AG04450 (cell line): ENCODE measurements at regions of chr6 and their contacts with region 1.

Region 1: GRCh38 chr6:52419809-52420670 is at the start of gene EFHC1:
- DNase-seq: peak; percentile 93
- H3K4me3 ChIP-seq: peak within 1 kb of the TSS; percentile 78
- H3K27ac ChIP-seq: peak within 1 kb of the TSS; percentile 69
- H3K27me3 ChIP-seq: no peaks in the 10 kb centered on the region
- CTCF ChIP-seq: no peak
- polyA plus RNA-seq, gene EFHC1: 43.3 and 59.8 TPM in 2 replicates

Region 2: DNA sequence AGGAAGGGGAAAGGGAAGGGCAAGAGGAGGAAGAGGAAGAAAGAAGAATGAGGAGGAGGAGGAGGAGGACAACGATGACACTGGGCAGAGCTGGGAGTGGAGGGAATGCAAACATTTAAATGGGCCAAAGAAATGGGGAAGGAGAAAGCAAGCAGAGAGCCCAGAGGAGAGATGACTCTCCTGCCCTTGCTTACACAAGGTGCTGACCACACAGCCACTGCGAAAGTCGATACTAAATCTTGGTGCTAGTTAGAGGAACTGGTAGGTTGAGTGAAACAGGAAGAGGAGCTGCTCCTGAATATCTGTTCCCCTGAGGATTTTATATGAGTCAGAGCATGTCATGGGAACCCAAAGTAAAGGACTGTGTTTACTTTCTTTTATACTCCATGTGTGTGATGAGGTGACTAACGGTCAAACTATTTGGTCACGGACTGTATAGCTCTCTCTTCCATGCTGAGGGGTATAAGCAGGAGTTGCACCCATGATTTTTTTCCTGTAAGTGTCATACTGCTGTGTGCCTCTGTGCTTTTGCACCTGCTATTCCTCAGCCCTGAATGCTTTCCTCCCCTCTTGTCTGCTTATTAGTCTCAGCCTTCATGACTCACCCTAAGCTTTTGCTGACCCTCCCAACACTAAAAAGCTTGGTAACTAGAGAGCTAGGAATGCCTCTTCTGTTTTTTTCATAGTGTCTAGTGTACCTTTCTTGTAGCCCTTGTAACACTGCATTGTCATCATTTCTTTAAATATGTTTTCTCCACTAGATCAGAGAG is 67.6 kb before region 1 on chr6:
- CTCF ChIA-PET with region 1: no interaction called
- POLR2A ChIA-PET with region 1: interaction called, 10 read pairs
- DNase-seq: peak; percentile 92
- H3K4me3 ChIP-seq: peak overlapping the region; percentile 42
- H3K27ac ChIP-seq: peak overlapping the region; percentile 95
- H3K27me3 ChIP-seq: no peaks in the 10 kb centered on the region
- CTCF ChIP-seq: no peak

Region 3: GRCh38 chr6:52577022-52577777 is 157.2 kb after region 1 on chr6 and contains the start of gene TRAM2:
- CTCF ChIA-PET with region 1: interaction called, 13 read pairs
- POLR2A ChIA-PET with region 1: interaction called, 5 read pairs
- DNase-seq: no peak
- H3K4me3 ChIP-seq: peak within 1 kb of the TSS; percentile 94
- H3K27ac ChIP-seq: peak within 1 kb of the TSS; percentile 89
- H3K27me3 ChIP-seq: no peaks in the 10 kb centered on the region
- CTCF ChIP-seq: no peak
- polyA plus RNA-seq, gene TRAM2: 134 and 152 TPM in 2 replicates

Region 4: GRCh38 chr6:52584203-52584602 is 164.2 kb after region 1 on chr6:
- CTCF ChIA-PET with region 1: no interaction called
- POLR2A ChIA-PET with region 1: interaction called, 12 read pairs
- DNase-seq: no peak
- H3K4me3 ChIP-seq: no peak overlapping the region
- H3K27ac ChIP-seq: no peak overlapping the region
- H3K27me3 ChIP-seq: no peaks in the 10 kb centered on the region
- CTCF ChIP-seq: no peak

Region 5: DNA sequence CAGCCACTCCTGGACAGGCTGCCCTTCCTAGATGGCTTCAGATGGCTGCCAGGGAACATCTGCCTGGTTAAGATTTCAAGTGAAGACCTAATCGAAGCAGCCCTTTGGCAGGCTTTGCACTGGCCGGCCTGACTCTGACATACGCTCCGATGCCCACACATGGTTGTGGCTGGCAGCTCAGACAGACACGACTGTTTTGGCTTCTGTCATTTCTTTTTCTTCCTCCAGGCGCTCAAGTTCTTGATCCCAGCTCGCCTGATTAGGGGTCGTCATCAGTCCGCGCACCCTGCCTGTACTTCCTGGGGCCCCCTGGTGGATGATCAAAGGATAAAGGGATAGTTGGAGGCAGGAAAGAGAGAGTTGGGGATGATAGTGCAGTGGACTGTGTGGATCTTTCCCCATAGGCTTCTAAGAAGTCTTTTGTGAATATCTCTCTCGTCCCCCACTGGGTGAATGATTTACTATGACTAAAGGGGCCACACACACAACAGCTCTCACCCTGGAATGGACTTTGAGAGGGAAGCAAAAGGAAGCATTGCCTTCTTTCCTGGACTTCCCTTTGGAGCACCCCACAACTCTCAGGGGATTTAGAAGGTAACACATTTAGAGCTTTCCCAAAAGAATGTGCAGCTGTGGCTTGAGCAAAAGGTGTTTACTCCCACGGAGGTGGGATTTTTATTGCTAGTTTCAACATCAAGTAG is 178.2 kb after region 1 on chr6:
- CTCF ChIA-PET with region 1: interaction called, 58 read pairs
- POLR2A ChIA-PET with region 1: interaction called, 4 read pairs
- DNase-seq: no peak
- H3K4me3 ChIP-seq: no peak overlapping the region
- H3K27ac ChIP-seq: no peak overlapping the region
- H3K27me3 ChIP-seq: no peaks in the 10 kb centered on the region
- CTCF ChIP-seq: peak; percentile 86

Region 6: DNA sequence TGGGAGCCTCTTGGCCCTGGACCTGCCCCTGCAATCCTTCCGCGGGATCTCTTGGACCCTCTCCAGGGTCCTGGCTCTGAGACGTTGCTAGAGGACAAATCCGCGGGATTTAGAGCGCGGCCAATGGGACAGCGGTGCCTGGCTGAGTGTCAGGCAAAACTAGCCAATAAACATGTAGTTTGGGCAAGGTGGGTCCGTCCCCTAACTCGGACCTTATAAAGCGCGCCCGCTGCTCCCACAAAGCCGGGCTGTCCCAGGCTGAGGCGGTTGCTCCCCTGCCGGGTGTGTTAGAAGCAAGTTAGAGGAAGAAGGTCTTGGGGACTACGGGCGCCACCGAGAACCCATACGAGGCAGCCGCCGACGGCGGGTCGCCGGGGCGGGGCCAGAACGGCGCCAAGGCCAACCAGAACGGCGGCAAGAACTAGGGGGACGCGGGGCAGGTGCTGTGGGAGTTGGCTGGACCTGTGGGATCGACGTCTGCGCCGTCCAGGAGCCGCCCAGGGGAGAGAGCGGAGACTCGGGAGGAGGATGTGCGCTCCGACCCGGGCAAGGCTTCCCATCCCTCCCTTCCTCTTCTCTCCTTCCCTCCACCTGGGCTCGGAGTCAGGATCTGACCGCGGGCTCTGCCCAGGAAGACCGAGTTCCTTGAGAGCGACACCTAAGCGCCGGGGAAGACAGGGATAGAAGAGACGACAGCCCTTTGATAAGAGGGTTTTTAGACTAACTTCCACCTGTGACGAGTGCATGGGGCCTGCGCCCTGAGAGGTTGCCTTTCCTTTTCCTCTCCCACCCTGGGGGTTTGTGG is 244.3 kb after region 1 on chr6:
- CTCF ChIA-PET with region 1: interaction called, 119 read pairs
- POLR2A ChIA-PET with region 1: interaction called, 3 read pairs
- DNase-seq: peak; percentile 88
- H3K4me3 ChIP-seq: peak overlapping the region; percentile 76
- H3K27ac ChIP-seq: no peak overlapping the region
- H3K27me3 ChIP-seq: no peaks in the 10 kb centered on the region
- CTCF ChIP-seq: no peak